Calu3 (cell line): ENCODE measurements at regions of chr7 and their contacts with region 1.

Region 1: DNA sequence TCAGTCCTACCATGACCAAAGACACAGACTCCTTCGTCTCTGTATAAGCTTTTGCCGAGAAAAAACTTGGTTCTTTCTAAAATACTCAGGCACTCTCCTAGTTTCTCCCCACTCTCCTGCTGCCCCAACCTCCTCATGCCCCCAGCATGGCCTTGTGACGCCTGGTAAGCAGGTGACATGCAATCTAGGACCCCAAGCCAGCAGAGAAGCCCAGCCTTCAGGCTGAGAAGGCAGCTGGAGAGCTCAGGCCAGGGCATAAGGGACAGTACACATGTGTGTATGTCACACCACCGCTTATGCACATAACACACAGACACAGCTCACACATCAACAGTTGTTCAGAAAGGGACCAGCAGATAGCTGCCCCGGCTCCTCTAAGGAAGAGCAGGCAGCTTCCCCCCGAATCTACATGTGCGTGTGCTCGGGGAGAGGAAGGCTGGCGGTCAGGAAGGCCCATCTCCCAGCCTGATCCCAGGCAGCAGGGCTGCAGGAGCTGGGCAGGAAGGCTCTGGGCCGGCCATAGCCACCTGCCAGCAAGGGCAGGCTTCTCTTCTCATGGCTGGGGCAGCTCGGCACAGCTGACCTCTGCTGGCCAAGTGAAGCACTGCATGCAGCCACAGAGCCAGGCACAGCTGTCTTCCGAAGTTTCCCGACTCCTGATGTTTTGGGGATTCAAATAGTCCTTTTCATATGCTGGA is 8.5 kb downstream of the DDX56 start:
- DNase-seq: peak; percentile 88
- H3K4me3 Mint-ChIP-seq: no peak overlapping the region
- H3K27ac Mint-ChIP-seq: peak overlapping the region; percentile 66
- H3K4me1 Mint-ChIP-seq: peaks cover 32% of the 10 kb centered on the region
- H3K27me3 Mint-ChIP-seq: no peaks in the 10 kb centered on the region
- CTCF ChIP-seq: peak; percentile 99

Region 2: DNA sequence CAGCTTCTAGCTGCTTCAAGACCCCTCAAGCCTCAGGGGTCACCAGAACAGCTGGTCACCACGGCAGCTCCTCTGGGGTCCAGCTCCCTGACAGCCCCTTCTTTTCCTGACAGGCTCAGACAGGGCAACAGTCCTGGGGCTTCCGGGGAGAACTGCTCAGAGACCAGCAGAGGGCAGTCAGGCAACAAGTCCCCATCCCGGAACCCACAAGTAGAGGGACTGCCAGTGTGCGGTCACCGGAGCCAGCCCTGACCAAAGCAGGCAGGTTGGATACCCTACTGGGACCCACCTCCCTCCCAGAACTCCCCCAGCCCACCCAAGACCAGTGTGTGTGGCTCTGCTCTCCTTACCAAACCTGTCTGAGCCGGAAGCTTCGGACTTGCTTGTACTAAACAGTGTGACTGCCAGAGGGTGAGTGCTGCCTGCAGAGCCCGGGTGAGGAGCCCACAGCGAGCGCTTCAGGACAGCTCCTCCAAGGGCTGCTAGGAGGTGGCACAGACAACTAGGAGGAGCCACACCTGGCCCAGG is 324.2 kb before region 1 on chr7:
- CTCF ChIA-PET with region 1: interaction called, 9 read pairs
- intact Hi-C with region 1: loop called (anchors 2 kb)
- DNase-seq: peak; percentile 88
- H3K4me3 Mint-ChIP-seq: peak overlapping the region; percentile 32
- H3K27ac Mint-ChIP-seq: no peak overlapping the region
- H3K4me1 Mint-ChIP-seq: peaks cover 8% of the 10 kb centered on the region
- H3K27me3 Mint-ChIP-seq: peaks cover 78% of the 10 kb centered on the region
- CTCF ChIP-seq: peak; percentile 86

Region 3: GRCh38 chr7:44348300-44348699 is 216.9 kb before region 1 on chr7:
- CTCF ChIA-PET with region 1: interaction called, 8 read pairs
- intact Hi-C with region 1: loop called (anchors 5 kb)
- DNase-seq: peak; percentile 46
- H3K4me3 Mint-ChIP-seq: no peak overlapping the region
- H3K27ac Mint-ChIP-seq: no peak overlapping the region
- H3K4me1 Mint-ChIP-seq: no peaks in the 10 kb centered on the region
- H3K27me3 Mint-ChIP-seq: peaks cover 39% of the 10 kb centered on the region
- CTCF ChIP-seq: peak; percentile 69

Region 4: DNA sequence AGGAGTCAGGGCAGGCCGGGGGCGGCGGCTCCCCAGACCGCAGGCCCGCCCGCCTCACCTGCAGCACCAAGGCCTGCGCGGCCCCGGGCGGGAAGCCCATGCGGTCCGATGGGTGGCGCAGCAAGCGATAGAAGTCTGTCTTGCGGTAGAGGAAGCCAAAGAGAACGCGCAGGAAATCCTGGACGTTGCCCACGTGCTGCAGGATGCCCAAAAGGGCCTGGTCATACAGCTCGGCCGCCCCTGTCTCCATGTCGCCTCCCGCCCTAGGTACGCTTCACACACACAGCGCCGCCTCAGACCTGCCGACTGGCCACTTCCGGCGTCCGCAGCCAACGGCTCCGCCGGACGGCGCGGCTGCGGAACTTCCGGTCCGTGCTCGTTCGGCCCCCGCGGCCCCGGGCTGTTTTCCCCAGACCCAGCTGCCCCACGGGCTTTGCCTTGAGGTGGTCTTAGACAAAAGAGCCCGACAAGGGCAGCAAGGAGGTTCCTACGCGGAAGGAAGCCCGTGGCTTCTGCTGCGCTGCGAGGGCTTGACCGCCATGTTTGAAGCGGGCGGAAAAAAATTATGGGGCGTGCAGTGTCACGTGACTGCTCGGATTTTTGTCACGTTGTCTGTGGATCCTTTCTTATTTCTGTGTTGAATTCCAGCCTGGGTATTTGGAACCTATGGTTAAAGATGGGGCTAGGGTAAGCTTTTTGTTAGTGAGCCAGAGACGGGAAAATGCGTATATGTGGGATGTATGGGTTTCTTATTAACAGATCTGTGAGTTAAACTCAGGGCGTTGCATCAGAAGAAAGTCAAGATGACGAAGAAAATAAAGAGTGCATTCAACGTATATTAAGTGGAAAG is 74.7 kb before region 1 on chr7 and contains the start of gene NUDCD3:
- CTCF ChIA-PET with region 1: interaction called, 3 read pairs
- intact Hi-C with region 1: loop called (anchors 2 kb)
- DNase-seq: peak; percentile 91
- H3K4me3 Mint-ChIP-seq: peak within 1 kb of the TSS; percentile 87
- H3K27ac Mint-ChIP-seq: peak within 1 kb of the TSS; percentile 97
- H3K4me1 Mint-ChIP-seq: peaks cover 39% of the 10 kb centered on the region
- H3K27me3 Mint-ChIP-seq: no peaks in the 10 kb centered on the region
- CTCF ChIP-seq: no peak
- total RNA-seq, gene NUDCD3: 176 and 202 TPM in 2 replicates

Region 5: DNA sequence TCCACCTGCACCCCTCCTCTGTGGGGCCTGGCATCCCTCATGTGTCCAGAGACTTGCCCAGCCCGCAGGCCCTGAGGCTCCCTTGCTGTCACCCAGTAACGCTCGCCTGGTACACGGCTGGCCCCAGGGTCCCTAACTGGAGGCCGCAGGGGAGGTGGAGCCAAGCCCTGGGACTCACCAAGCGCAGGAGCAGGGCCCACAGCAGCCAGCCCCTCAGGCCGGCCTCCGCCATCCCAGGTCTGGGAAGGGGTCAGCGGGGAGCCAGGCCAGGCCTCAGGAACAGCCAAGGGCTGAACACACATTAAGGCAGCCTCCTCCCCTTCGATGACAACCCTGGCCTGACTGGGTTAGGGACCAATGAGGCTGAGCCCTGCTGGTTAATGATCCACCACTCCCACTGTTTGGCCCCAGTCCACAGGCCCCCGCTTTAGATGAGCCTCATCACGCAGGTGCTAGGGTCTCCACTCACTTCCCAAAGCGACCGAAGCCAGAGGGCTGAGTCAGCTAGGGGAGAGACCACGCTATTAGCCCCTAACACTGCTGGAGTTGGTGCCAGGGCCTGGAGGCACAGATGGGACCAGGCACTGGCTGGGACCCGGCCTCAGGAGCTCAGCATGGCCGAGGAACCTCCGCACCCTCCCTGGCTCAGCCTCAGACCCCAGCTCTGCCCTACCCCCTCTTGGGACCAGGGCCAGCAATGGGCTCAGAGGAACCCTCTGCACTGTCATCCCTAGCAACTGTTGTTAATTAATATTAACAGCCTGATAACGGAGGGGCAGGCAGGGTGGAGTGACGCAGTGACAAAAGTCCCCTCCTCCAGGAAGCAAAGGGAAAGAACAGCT is 24.0 kb before region 1 on chr7 and contains the start of gene NPC1L1:
- CTCF ChIA-PET with region 1: interaction called, 12 read pairs
- intact Hi-C with region 1: loop called (anchors 1 kb)
- DNase-seq: peak; percentile 90
- H3K4me3 Mint-ChIP-seq: peak within 1 kb of the TSS; percentile 78
- H3K27ac Mint-ChIP-seq: peak within 1 kb of the TSS; percentile 85
- H3K4me1 Mint-ChIP-seq: peaks cover 85% of the 10 kb centered on the region
- H3K27me3 Mint-ChIP-seq: no peaks in the 10 kb centered on the region
- CTCF ChIP-seq: no peak
- total RNA-seq, gene NPC1L1: 45.0 and 46.0 TPM in 2 replicates

Region 6: DNA sequence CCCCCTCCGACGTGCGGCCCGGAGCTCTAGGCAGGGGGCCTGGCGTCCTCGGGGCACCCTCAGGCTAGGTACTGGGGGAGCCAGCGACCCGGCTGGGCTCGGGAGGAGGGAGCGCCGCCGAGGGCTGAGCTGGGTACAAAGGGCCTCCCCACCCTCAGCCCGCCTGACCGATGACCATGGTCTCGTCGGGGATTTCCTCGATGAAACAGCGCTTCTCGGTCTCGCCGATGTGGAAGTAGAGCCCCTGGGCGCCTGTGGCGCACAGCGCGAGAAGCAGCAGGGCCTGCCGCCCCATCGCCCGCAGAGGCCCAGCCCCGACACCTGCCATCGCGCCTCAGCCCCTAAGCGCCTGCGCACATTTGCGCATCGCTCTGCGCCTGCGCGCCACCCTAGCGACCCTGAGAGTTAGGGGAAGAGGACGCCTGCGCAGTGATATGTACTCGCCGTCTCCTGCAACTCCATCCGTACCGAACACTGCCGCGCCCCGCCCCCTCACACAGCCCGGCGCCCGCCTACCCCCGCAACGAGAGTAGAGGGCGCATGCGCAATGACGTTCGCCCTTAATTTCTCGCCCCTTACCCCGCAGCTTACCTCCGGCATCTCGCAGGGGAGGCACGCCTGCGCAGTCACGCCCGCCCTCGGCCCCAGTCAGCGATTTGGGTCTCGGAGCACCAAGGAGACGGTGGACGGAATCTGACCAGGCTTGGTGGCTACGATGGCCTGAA is 16.8 kb after region 1 on chr7 and contains the start of gene TMED4:
- CTCF ChIA-PET with region 1: interaction called, 10 read pairs
- intact Hi-C with region 1: no loop called
- DNase-seq: peak; percentile 100
- H3K4me3 Mint-ChIP-seq: peak within 1 kb of the TSS; percentile 93
- H3K27ac Mint-ChIP-seq: peak within 1 kb of the TSS; percentile 81
- H3K4me1 Mint-ChIP-seq: peaks cover 18% of the 10 kb centered on the region
- H3K27me3 Mint-ChIP-seq: no peaks in the 10 kb centered on the region
- CTCF ChIP-seq: no peak
- total RNA-seq, gene TMED4: 115 and 128 TPM in 2 replicates